ENCODE measurements at regions of chr5 and their contacts with region 1.

Region 1: DNA sequence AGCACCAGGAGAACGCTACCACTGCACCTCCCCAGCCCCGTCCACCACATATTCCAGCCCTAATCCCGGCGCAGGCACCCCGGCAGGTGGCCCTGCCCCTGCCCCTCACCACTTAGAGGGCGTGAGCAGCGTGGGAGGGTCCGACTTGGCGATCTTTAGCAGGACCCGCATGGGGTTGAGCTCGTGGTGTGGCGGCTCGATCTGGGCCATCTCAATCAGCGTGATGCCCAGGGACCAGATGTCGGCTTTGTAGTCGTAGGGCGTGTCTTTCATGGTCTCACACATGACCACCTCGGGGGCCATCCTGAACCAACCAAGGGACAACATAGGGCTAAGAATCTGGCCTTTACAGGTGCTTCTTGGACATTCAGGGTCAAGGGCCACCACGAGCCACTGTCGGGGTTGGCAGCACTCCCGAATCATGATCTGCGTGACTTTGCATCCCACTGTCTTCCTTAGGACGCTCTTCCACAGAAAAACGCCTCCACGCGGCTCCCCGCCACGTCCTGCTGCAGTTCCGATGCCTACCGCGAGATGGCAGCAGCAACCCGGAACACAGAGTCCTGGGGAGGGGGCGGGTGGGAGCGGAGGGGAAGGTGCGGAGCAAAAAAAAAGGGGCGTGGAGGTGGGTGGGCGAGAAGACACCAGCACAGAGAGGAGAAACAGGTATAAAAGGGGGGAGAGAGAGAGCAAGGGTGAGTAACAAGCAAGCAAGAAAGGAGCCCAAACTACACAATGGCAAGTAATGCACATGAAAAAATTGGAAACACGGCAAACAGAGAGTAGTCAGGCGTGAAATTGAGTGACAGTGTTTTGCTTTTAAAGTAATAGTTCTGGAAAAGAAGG is 81.3 kb downstream of the STK10 start:
- DNase-seq: peak; percentile 50
- CTCF ChIP-seq: peak; percentile 94

Region 2: DNA sequence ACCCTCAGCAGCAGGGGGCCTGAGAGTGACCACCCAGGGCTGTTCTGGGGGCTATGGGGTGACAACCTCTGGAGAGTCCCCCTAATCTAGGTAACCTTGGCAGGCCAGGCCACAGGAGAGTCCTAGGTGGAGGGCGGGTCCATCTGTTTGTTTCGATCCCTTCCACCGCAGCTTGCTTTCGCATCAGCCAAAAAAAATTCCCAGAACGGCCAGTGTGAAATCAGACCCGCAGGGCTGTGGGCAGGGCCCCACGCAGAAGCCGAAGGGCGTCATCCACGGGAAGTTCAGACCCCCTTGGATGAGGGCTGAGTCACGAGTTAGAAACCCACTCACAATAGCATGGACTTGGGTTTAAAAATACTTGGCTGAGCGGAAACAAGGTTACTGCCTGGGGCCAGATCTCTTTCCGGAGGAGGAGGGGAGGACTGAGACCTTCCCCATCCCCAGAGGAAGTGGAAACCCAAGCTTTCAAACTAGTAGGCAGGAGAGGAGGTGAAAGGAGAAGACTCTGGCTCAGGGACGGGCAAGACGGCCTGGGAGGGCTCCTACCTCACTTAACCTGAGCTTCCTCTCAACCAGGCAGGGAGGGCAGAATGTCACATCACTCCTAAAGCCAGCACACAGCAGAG is 72.7 kb after region 1 on chr5:
- in situ Hi-C with region 1: loop called (anchors 5 kb)
- DNase-seq: peak; percentile 43
- CTCF ChIP-seq: no peak

Region 3: DNA sequence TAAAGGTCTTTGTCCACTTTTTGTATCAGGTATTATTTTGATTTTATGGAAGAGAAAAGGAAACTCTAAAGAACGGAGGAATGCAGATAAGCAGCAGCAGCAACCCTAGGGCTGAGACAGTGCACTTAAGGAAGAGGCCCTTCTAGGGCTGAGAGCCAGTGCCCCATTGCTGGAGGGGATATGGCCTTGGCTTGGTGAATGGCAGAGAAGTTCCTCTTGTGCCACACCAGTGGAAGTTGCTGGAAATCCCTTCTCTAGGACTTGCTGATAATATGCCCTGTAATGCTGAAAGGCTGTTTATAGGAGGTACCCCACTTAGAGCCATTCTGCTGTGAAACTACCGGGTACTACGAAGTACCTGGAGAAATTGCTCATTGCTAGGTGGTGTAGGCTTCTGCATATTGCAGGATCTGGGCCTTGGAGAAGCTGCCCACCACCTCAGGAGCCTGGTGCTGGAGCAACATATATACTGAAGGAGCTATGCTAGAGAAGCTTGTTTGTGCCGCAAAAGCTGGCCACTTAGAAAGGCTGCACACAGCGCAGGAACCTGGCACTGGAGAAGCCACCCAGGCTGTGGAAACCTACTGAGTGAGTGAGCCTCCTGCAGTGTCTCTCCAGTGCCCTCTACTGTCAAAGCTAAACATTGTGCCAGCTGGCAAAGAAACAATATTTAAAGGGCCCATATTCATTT is 186.5 kb after region 1 on chr5:
- in situ Hi-C with region 1: loop called (anchors 10 kb)
- DNase-seq: peak; percentile 67
- CTCF ChIP-seq: peak; percentile 86

Measured in GM13977 (cell line).